CD8-positive, alpha-beta T cell (primary cell): ENCODE measurements at regions of chr17 and their contacts with region 1.

Region 1: DNA sequence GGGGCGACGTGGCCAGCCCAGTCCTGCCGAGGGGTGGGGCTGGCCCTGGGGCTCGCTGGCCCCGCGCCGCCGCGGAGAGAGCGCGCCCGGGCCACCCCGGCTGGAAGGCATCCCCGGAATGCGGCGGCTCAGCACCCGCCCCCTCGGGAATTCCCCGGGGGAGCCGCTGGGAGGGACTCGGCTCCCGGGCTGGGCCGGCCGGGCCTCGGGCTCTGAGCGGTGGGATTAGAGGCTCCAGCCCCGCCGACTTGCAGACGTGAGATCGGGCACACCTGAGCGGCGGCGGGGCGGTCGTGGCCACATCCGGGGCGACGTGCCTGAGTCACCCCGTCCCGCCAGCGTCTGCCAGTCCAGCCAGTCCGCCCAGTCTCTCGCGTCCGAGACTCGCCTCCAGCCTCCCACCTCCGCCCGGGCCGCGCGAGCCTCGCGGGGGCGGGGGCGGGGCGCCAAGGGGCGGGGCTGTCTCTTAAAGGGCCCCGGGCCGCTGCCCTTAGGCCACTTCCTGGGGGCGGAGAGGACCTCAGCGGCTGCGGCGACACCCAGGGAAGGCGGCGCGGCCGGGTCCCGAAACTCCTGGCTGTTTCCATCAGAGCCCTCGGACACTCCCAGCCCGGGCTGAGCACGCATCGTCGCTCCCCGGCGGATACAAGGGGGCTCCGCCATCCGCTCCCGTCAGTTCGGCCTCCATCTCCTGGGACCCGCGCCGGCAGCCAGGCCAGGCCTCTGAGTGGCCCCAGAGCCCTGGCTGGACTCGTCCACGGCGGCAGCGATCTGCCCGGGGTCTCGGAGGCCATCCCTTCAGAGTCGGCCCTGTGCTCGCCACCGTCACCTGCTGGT is at the start of gene KCTD11:
- DNase-seq: peak in 8 of 9 experiments; percentile 64 to 90 (median 80)
- ATAC-seq: peak; percentile 48
- H3K4me3 ChIP-seq: peak within 1 kb of the TSS; percentile 62 to 73
- H3K4me3 Mint-ChIP-seq: peak within 1 kb of the TSS; percentile 87
- H3K27ac ChIP-seq: peak within 1 kb of the TSS; percentile 53 to 87
- H3K27ac Mint-ChIP-seq: peak within 1 kb of the TSS; percentile 88
- H3K4me1 ChIP-seq: peaks cover 42% of the 10 kb centered on the region
- H3K4me1 Mint-ChIP-seq: peaks cover 38% of the 10 kb centered on the region
- H3K27me3 ChIP-seq: no peaks in the 10 kb centered on the region
- H3K27me3 Mint-ChIP-seq: no peaks in the 10 kb centered on the region
- CTCF ChIP-seq: peak; percentile 20
- total RNA-seq, gene KCTD11: 1.4 to 1.8 TPM

Region 2: GRCh38 chr17:7214300-7215135 is 137.4 kb before region 1 on chr17:
- CTCF ChIA-PET with region 1: no interaction called
- POLR2A ChIA-PET with region 1: no interaction called
- intact Hi-C with region 1: no loop called
- DNase-seq: peak; percentile 97 to 100 (median 98)
- ATAC-seq: peak; percentile 75
- H3K4me3 ChIP-seq: peak overlapping the region; percentile 36 to 56
- H3K4me3 Mint-ChIP-seq: peak overlapping the region; percentile 90
- H3K27ac ChIP-seq: peak overlapping the region; percentile 80 to 95
- H3K27ac Mint-ChIP-seq: peak overlapping the region; percentile 95
- H3K4me1 ChIP-seq: peaks cover 51% of the 10 kb centered on the region
- H3K4me1 Mint-ChIP-seq: peaks cover 61% of the 10 kb centered on the region
- H3K27me3 ChIP-seq: no peaks in the 10 kb centered on the region
- H3K27me3 Mint-ChIP-seq: no peaks in the 10 kb centered on the region
- CTCF ChIP-seq: peak; percentile 52

Region 3: GRCh38 chr17:7280519-7281429 is 71.1 kb before region 1 on chr17:
- CTCF ChIA-PET with region 1: interaction called, 26 read pairs
- POLR2A ChIA-PET with region 1: no interaction called
- intact Hi-C with region 1: loop called in 1 of 2 experiments (anchors 1 kb)
- DNase-seq: peak; percentile 76 to 92 (median 86)
- ATAC-seq: peak; percentile 88
- H3K4me3 ChIP-seq: peak overlapping the region; percentile 41 to 46
- H3K4me3 Mint-ChIP-seq: peak overlapping the region; percentile 73
- H3K27ac ChIP-seq: no peak overlapping the region
- H3K27ac Mint-ChIP-seq: no peak overlapping the region
- H3K4me1 ChIP-seq: peaks cover 25% of the 10 kb centered on the region
- H3K4me1 Mint-ChIP-seq: peaks cover 16% of the 10 kb centered on the region
- H3K27me3 ChIP-seq: peaks cover 0 to 26% of the 10 kb centered on the region in 2 experiments
- H3K27me3 Mint-ChIP-seq: peaks cover 9% of the 10 kb centered on the region
- CTCF ChIP-seq: peak; percentile 84

Region 4: DNA sequence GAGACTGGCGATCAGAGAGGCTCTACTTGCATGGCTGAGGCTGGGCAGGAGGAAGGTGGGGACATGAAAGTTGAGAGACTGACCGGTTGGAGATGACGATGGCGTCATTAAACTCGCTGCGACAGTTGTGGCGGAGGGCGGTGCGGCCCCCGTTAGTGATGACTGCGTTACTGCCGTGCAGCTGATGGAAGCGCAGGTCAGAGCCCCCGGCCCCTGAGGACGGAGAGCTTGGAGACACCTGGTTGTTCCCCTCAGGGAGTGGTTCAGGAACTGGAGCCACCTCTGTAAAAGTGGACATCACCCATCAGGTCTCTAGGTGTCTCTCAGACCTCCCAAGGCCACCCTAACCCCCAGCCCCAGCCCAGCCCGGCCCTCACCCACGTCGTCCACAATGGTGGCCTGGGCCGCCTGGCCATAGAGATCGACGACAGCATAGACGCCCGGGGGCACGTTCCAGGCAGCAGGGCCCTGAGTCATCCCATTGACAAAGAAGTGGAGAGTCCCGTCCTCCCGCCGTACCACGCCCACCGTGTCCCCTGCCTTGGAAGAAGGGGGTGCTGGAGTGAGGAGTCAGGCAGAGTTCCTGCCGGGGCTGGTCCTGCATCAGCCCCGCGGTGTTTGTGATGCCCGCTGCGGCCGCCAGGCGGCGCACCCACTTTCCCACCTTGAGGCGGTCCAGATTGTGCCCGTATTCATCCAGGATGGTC is 28.0 kb before region 1 on chr17:
- CTCF ChIA-PET with region 1: interaction called, 47 read pairs
- POLR2A ChIA-PET with region 1: interaction called, 11 read pairs
- intact Hi-C with region 1: loop called (anchors 1 kb)
- DNase-seq: peak; percentile 38 to 83 (median 71)
- ATAC-seq: peak; percentile 56
- H3K4me3 ChIP-seq: no peak overlapping the region
- H3K4me3 Mint-ChIP-seq: no peak overlapping the region
- H3K27ac ChIP-seq: no peak overlapping the region
- H3K27ac Mint-ChIP-seq: no peak overlapping the region
- H3K4me1 ChIP-seq: peaks cover 14% of the 10 kb centered on the region
- H3K4me1 Mint-ChIP-seq: peaks cover 14% of the 10 kb centered on the region
- H3K27me3 ChIP-seq: no peaks in the 10 kb centered on the region
- H3K27me3 Mint-ChIP-seq: no peaks in the 10 kb centered on the region
- CTCF ChIP-seq: peak; percentile 86

Region 5: GRCh38 chr17:7367918-7368598 is 16.2 kb after region 1 on chr17:
- CTCF ChIA-PET with region 1: interaction called, 16 read pairs
- POLR2A ChIA-PET with region 1: interaction called, 3 read pairs
- intact Hi-C with region 1: no loop called
- DNase-seq: no peak
- ATAC-seq: no peak
- H3K4me3 ChIP-seq: no peak overlapping the region
- H3K4me3 Mint-ChIP-seq: no peak overlapping the region
- H3K27ac ChIP-seq: no peak overlapping the region
- H3K27ac Mint-ChIP-seq: no peak overlapping the region
- H3K4me1 ChIP-seq: no peaks in the 10 kb centered on the region
- H3K4me1 Mint-ChIP-seq: no peaks in the 10 kb centered on the region
- H3K27me3 ChIP-seq: no peaks in the 10 kb centered on the region
- H3K27me3 Mint-ChIP-seq: no peaks in the 10 kb centered on the region
- CTCF ChIP-seq: no peak

Region 6: GRCh38 chr17:7394452-7395191 is 42.7 kb after region 1 on chr17 and contains the start of gene PLSCR3:
- CTCF ChIA-PET with region 1: interaction called, 13 read pairs
- POLR2A ChIA-PET with region 1: interaction called, 3 read pairs
- intact Hi-C with region 1: no loop called
- DNase-seq: peak; percentile 65 to 92 (median 80)
- ATAC-seq: peak; percentile 88
- H3K4me3 ChIP-seq: peak within 1 kb of the TSS; percentile 81 to 84
- H3K4me3 Mint-ChIP-seq: peak within 1 kb of the TSS; percentile 92
- H3K27ac ChIP-seq: peak within 1 kb of the TSS; percentile 68 to 72
- H3K27ac Mint-ChIP-seq: peak within 1 kb of the TSS; percentile 92
- H3K4me1 ChIP-seq: peaks cover 33% of the 10 kb centered on the region
- H3K4me1 Mint-ChIP-seq: peaks cover 26% of the 10 kb centered on the region
- H3K27me3 ChIP-seq: no peaks in the 10 kb centered on the region
- H3K27me3 Mint-ChIP-seq: no peaks in the 10 kb centered on the region
- CTCF ChIP-seq: no peak
- total RNA-seq, gene PLSCR3: 38.1 TPM

Region 7: DNA sequence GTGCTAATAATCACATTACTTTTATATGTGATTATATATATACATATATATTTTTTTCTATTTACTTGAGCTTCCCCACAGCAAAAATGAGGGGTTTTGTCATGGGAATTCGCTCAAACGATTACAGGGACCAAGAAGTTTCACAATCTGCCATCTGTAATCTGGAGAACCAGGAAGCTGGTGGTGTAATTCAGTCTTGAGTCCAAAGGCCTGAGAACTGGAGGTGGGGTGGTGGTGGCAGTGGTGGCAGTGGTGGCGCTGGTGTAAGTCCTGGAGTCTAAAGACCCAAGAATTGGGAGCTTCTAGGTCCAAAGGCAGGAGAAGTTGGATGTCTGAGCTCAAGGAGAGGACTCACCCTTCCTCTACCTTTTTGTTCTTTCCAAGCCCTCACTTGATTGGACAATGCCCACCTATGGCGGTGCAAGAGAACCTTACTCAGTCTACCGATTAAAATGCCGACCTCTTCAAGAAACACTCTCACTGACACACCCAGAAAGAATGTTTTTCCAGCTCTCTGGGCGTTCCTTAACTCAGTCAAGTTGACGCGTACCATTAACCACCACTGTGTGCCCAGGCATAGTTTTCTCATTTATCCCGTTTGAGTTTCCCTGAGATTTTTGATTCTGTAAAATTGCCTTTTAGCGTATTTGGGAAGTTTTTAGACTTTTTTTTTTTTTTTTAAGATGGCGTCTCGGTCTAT is 164.2 kb after region 1 on chr17:
- CTCF ChIA-PET with region 1: interaction called, 29 read pairs
- POLR2A ChIA-PET with region 1: interaction called, 4 read pairs
- intact Hi-C with region 1: loop called in 1 of 2 experiments (anchors 1 kb)
- DNase-seq: no peak
- ATAC-seq: no peak
- H3K4me3 ChIP-seq: no peak overlapping the region
- H3K4me3 Mint-ChIP-seq: no peak overlapping the region
- H3K27ac ChIP-seq: no peak overlapping the region
- H3K27ac Mint-ChIP-seq: no peak overlapping the region
- H3K4me1 ChIP-seq: no peaks in the 10 kb centered on the region
- H3K4me1 Mint-ChIP-seq: peaks cover 2% of the 10 kb centered on the region
- H3K27me3 ChIP-seq: no peaks in the 10 kb centered on the region
- H3K27me3 Mint-ChIP-seq: no peaks in the 10 kb centered on the region
- CTCF ChIP-seq: no peak

Region 8: GRCh38 chr17:7614422-7615264 is 262.8 kb after region 1 on chr17 and contains the start of gene FXR2:
- CTCF ChIA-PET with region 1: interaction called, 5 read pairs
- POLR2A ChIA-PET with region 1: no interaction called
- intact Hi-C with region 1: loop called in 1 of 2 experiments (anchors 1 kb)
- DNase-seq: peak; percentile 96 to 100 (median 98)
- ATAC-seq: peak; percentile 87
- H3K4me3 ChIP-seq: peak within 1 kb of the TSS; percentile 78 to 86
- H3K4me3 Mint-ChIP-seq: peak within 1 kb of the TSS; percentile 89
- H3K27ac ChIP-seq: peak within 1 kb of the TSS; percentile 70 to 89
- H3K27ac Mint-ChIP-seq: peak within 1 kb of the TSS; percentile 96
- H3K4me1 ChIP-seq: peaks cover 30% of the 10 kb centered on the region
- H3K4me1 Mint-ChIP-seq: peaks cover 38% of the 10 kb centered on the region
- H3K27me3 ChIP-seq: no peaks in the 10 kb centered on the region
- H3K27me3 Mint-ChIP-seq: no peaks in the 10 kb centered on the region
- CTCF ChIP-seq: peak; percentile 39
- total RNA-seq, gene FXR2: 18.8 to 21.7 TPM